ENCODE measurements at regions of chr12 and their contacts with region 1.

Region 1: DNA sequence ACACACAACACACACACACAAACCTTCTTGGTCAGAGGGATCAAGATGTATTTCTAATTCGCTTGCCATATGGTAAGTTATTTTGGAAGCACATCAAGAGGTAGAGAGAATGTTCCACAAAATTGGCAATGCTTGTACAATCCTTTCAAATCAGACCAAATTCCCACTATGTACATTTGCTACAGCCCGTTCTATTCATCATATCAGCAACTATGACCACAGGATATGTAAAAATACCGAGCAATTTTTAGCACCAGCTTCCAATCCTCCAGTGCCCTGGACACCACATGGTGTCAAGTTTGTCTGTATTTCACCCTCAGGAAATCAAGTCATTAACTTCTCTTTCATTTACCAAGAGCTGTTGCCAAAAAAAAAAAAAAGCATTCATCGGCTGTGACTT is 21.2 kb downstream of the TBX5 start:
- DNase-seq: peak; percentile 69
- H3K4me3 ChIP-seq: no peak overlapping the region
- H3K27me3 ChIP-seq: no peaks in the 10 kb centered on the region
- CTCF ChIP-seq: no peak

Region 2: GRCh38 chr12:113973109-113973904 is 411.4 kb before region 1 on chr12:
- CTCF ChIA-PET with region 1: no interaction called
- POLR2A ChIA-PET with region 1: no interaction called
- DNase-seq: no peak
- H3K4me3 ChIP-seq: no peak overlapping the region
- H3K27me3 ChIP-seq: peaks cover 19% of the 10 kb centered on the region
- CTCF ChIP-seq: no peak

Region 3: DNA sequence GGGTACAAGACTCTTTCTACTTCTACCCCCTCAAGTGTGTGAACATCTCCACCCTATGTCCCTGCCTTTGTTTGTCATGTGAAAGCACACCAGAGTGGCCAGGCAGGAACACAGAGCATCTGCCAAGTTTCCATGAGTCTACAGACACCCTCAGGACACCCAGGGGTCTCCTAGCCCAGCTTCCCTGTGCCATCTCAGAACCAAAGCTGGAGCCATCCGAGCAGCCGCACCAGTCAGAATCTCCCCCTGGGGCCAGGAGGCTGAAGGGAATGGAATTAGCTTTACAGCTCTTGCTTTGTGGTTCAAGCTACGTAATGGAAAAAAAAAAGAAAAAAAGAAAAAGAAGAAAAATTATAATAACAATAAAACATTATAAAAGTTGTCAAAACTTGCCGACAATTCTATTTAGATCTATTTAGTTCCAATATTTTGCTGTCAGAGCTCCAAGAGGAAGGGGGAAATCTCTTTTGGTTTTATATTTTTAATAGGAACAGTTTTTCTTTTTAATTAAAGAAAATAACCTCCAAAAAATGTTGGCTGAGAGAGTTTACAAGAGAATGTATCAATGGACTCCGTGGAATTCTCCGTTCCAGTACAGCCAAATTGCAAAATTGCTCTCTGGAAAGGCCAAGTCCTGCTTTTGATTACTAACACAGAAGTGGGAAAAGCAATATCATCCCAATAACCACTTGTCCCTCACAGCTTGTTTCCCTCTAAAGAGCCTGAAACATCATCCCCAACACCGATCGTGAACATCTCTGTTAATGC is 15.9 kb before region 1 on chr12:
- CTCF ChIA-PET with region 1: interaction called, 3 read pairs
- POLR2A ChIA-PET with region 1: interaction called, 14 read pairs
- DNase-seq: no peak
- H3K4me3 ChIP-seq: no peak overlapping the region
- H3K27me3 ChIP-seq: no peaks in the 10 kb centered on the region
- CTCF ChIP-seq: no peak

Measured in BJ (cell line).